ENCODE measurements at regions of chr13 and their contacts with region 1.

Region 1: DNA sequence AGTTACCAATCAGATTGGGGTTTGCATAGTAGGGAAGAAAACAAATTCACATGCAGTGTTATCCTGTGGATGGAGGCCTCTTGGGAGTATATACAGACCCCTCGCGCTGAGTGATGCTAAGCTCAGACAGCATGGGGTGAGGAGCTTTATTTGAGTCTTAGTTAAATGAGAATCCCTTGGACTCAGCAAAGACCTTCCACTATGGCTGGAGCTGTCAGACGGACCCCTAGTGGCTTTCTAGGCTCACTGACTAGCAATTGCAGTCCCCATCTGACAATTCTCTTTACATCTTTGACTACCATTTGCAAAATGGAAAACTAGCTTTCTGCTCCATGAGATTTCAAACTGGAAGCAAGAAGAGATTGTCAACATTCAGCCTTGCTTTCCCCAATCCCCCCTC is 90.4 kb downstream of the STOML3 start:
- DNase-seq: peak; percentile 34
- ATAC-seq: peak; percentile 92
- H3K4me3 Mint-ChIP-seq: no peak overlapping the region
- H3K27ac Mint-ChIP-seq: no peak overlapping the region
- H3K4me1 Mint-ChIP-seq: no peaks in the 10 kb centered on the region
- H3K27me3 Mint-ChIP-seq: no peaks in the 10 kb centered on the region
- CTCF ChIP-seq: no peak

Region 2: GRCh38 chr13:38883783-38884182 is 16.4 kb before region 1 on chr13:
- CTCF ChIA-PET with region 1: interaction called, 18 read pairs
- POLR2A ChIA-PET with region 1: no interaction called
- DNase-seq: no peak
- ATAC-seq: peak; percentile 53
- H3K4me3 Mint-ChIP-seq: no peak overlapping the region
- H3K27ac Mint-ChIP-seq: no peak overlapping the region
- H3K4me1 Mint-ChIP-seq: peaks cover 13% of the 10 kb centered on the region
- H3K27me3 Mint-ChIP-seq: no peaks in the 10 kb centered on the region
- CTCF ChIP-seq: no peak

Region 3: GRCh38 chr13:38914070-38914469 is 13.9 kb after region 1 on chr13:
- CTCF ChIA-PET with region 1: interaction called, 15 read pairs
- POLR2A ChIA-PET with region 1: no interaction called
- DNase-seq: peak; percentile 34
- ATAC-seq: peak; percentile 69
- H3K4me3 Mint-ChIP-seq: no peak overlapping the region
- H3K27ac Mint-ChIP-seq: no peak overlapping the region
- H3K4me1 Mint-ChIP-seq: no peaks in the 10 kb centered on the region
- H3K27me3 Mint-ChIP-seq: no peaks in the 10 kb centered on the region
- CTCF ChIP-seq: no peak

Region 4: DNA sequence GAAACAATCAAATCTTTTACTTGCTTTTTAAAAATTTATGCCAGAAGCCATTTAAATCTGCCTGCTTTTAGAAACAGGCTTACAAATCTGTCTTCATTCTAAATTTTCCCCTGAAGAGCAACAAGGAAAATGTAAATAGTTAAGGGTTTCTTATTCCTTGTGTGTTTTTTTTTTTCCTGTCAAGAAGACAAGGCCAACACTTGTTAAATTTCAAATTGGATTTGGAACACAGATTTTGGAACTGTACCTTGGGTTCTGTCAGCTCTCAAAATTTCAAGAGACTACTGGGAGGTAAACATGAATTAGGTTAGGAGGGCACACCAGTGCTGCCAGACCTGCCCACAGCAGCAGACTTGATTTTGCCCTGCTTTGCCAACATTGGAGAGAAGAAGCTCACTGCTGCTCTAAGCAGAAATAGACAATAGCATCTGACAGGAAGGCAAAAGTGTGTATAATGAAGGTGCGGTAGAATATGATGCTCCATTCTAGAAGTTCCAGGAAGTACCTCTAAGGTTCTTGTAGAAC is 259.7 kb after region 1 on chr13:
- CTCF ChIA-PET with region 1: no interaction called
- POLR2A ChIA-PET with region 1: no interaction called
- DNase-seq: no peak
- ATAC-seq: no peak
- H3K4me3 Mint-ChIP-seq: no peak overlapping the region
- H3K27ac Mint-ChIP-seq: no peak overlapping the region
- H3K4me1 Mint-ChIP-seq: no peaks in the 10 kb centered on the region
- H3K27me3 Mint-ChIP-seq: peaks cover 2% of the 10 kb centered on the region; the same call in 1 of the 2 replicates
- CTCF ChIP-seq: no peak